Vagina (tissue), 2 donors: ENCODE measurements at regions of chr12 and their contacts with region 1.

Region 1: GRCh38 chr12:132761032-132761920 is at the start of gene ANKLE2:
- DNase-seq: no peak
- H3K4me3 ChIP-seq: peak within 1 kb of the TSS; percentile 98
- H3K27ac ChIP-seq: peak within 1 kb of the TSS; percentile 94
- H3K4me1 ChIP-seq: peaks cover 31% of the 10 kb centered on the region
- H3K27me3 ChIP-seq: no peaks in the 10 kb centered on the region
- CTCF ChIP-seq: no peak
- POLR2A ChIP-seq: peak in 1 of 2 donors; percentile 12
- total RNA-seq, gene ANKLE2: 63.1 TPM

Region 2: GRCh38 chr12:132908145-132909044 is 147.1 kb after region 1 on chr12:
- intact Hi-C with region 1: loop called (anchors 5 kb)
- DNase-seq: peak in 1 of 2 donors; percentile 99
- H3K4me3 ChIP-seq: peak overlapping the region; percentile 63 to 78
- H3K27ac ChIP-seq: peak overlapping the region; percentile 68
- H3K4me1 ChIP-seq: peaks cover 20% of the 10 kb centered on the region
- H3K27me3 ChIP-seq: no peaks in the 10 kb centered on the region
- CTCF ChIP-seq: no peak
- POLR2A ChIP-seq: peak in 1 of 2 donors; percentile 66

Region 3: GRCh38 chr12:132966676-132967415 is 205.6 kb after region 1 on chr12:
- intact Hi-C with region 1: no loop called
- DNase-seq: no peak
- H3K4me3 ChIP-seq: no peak overlapping the region
- H3K27ac ChIP-seq: no peak overlapping the region
- H3K4me1 ChIP-seq: no peaks in the 10 kb centered on the region
- H3K27me3 ChIP-seq: no peaks in the 10 kb centered on the region
- CTCF ChIP-seq: no peak
- POLR2A ChIP-seq: no peak